ENCODE measurements at regions of chr6 and their contacts with region 1.

Region 1: DNA sequence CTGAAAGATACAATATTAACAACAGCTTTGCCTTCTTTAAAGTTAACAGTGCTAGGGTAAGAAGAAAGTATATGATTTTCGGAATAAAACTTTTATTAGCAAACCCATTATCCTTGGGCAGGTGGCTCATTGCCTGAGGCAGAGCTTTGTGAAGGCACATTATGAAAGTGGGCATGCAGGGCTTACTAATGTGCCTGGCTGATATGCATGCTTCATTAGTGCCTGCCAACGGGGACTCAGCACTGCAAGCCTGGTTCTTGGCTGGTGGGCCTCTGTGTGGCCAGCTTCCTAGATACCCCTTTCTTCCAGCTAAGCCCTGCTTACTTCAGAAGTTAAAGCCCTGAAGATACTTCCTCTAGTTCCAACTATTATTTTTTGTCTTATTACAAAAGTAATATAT is 481.6 kb downstream of the ADGRB3 start:
- DNase-seq: peak in 4 of 10 donors; percentile 14 to 77 (median 63)

Region 2: DNA sequence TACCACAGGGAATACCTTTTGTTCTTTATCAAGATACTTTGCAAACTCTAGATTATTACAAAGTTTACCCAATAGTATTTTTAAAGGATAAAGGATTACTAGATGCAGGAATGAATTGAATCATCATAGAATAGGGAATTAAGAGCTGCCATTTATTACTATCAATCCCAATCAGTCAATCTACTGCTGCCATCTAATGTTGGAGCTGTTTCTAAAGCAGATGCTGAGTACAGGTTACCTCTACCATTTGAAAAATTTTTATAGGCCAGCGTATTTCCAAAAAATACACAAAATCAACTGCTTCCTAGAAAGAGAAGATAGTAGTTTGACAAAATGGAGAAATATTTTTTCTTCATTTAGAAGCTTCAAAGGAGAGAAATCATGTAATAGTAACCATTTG is 38.8 kb after region 1 on chr6:
- intact Hi-C with region 1: no loop called
- DNase-seq: no peak

Region 3: GRCh38 chr6:69220375-69220774 is 103.7 kb after region 1 on chr6:
- intact Hi-C with region 1: loop called (anchors 5 kb)
- DNase-seq: no peak

Region 4: DNA sequence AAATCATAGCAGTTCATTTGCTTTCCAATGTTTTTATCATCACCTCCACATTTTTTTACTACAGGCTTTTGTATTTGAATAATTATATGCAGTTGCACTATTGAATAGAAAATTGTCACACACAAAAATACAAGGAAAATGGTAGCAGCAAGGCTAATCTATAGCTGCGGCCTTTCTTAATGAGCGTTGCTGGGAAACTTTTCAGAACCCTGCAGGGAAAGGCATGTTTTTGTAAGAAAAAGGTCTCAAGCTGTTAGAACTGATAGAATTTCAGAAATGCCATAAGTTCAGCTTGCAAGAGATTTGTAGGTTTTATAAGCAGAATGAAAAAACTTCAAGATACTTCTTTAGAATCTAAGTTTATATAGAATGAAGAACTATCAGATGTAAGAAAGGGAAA is 144.4 kb after region 1 on chr6:
- intact Hi-C with region 1: no loop called
- DNase-seq: no peak